CD8-positive, alpha-beta T cell (primary cell): ENCODE measurements at regions of chr11 and their contacts with region 1.

Region 1: DNA sequence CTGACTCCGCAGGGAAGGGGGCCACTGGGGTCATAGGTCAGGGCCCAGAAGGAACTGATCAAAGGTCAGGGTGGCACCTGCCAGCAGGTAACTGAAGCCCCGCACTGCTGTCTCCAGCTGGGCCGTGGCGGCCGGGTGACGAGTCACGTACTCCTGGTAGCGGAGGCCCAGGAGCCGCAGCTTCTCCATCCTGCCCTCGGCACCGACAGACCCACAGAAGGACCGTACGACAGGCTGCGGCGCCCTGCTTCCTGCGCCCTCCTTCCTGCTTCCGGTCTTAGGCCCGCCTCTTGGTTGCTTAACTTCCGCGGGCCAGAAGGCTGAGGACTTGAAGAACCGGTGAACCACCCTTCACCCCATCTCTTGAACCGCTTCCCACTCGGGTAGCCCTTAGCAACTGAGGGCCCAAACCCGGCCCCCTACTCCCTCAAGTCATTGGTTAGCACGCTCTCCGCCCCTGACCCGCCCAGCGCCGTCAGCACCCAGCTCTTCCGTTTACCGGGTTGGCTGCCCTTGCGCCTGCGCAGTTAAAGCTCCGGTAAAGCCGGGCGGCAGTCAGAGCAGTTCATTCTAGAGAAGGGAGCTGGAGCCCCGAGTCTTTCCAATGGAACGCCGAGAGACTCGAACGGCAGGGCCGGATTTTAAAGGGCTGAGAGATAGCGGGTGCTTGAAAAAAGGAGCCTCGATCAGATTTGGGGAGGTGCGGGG is at the start of gene PEX16:
- DNase-seq: peak; percentile 90 to 99 (median 94)
- ATAC-seq: peak; percentile 90
- H3K4me3 ChIP-seq: peak within 1 kb of the TSS; percentile 94 to 98
- H3K4me3 Mint-ChIP-seq: peak within 1 kb of the TSS; percentile 91
- H3K27ac ChIP-seq: peak within 1 kb of the TSS; percentile 91 to 94
- H3K27ac Mint-ChIP-seq: peak within 1 kb of the TSS; percentile 96
- H3K4me1 ChIP-seq: peaks cover 26% of the 10 kb centered on the region
- H3K4me1 Mint-ChIP-seq: peaks cover 49% of the 10 kb centered on the region
- H3K27me3 ChIP-seq: no peaks in the 10 kb centered on the region
- H3K27me3 Mint-ChIP-seq: peaks cover 2% of the 10 kb centered on the region
- CTCF ChIP-seq: no peak
- total RNA-seq, gene PEX16: 51.5 to 55.6 TPM

Region 2: DNA sequence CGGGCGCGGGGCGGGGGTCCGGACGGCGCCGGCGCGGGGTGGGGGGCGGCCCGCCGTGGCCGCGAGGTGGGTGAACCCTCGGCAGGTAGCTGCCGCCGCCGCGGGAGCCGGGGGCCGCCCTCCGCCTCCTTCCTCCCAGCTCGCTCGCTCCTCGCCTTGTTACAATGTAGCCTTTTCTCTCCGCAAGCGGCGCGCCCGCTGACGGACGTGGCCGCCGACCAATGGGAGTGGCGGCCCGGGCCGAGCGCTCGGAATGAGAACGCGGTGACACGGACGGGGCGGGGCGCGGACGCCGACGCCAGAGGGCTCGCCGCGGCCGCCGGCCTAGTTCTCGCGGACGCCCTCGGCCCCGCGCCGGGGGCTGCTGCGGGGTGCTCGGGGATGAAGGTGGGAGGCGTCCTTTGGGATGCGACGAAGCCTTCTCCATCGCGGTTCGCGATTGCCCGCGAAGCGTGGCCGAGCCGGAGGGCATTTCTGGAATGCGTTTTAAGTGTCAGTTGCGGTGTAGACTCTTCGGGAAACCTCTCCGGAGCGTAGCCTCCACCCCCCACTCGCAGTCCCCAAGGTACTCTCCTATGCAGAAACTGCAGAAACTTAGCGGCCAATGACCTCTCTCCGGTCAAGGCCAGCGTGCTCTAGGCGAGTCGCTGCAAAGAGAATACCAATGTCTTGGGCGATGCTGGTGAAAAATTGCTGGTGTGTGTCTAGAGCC is 770.6 kb before region 1 on chr11:
- CTCF ChIA-PET with region 1: no interaction called
- POLR2A ChIA-PET with region 1: no interaction called
- intact Hi-C with region 1: loop called in 1 of 2 experiments (anchors 5 kb)
- DNase-seq: peak; percentile 84 to 96 (median 91)
- ATAC-seq: peak; percentile 96
- H3K4me3 ChIP-seq: peak overlapping the region; percentile 78 to 89
- H3K4me3 Mint-ChIP-seq: peak overlapping the region; percentile 84
- H3K27ac ChIP-seq: peak overlapping the region; percentile 52 to 70
- H3K27ac Mint-ChIP-seq: peak overlapping the region; percentile 89
- H3K4me1 ChIP-seq: peaks cover 16% of the 10 kb centered on the region
- H3K4me1 Mint-ChIP-seq: peaks cover 38% of the 10 kb centered on the region
- H3K27me3 ChIP-seq: no peaks in the 10 kb centered on the region
- H3K27me3 Mint-ChIP-seq: peaks cover 10% of the 10 kb centered on the region
- CTCF ChIP-seq: no peak

Region 3: DNA sequence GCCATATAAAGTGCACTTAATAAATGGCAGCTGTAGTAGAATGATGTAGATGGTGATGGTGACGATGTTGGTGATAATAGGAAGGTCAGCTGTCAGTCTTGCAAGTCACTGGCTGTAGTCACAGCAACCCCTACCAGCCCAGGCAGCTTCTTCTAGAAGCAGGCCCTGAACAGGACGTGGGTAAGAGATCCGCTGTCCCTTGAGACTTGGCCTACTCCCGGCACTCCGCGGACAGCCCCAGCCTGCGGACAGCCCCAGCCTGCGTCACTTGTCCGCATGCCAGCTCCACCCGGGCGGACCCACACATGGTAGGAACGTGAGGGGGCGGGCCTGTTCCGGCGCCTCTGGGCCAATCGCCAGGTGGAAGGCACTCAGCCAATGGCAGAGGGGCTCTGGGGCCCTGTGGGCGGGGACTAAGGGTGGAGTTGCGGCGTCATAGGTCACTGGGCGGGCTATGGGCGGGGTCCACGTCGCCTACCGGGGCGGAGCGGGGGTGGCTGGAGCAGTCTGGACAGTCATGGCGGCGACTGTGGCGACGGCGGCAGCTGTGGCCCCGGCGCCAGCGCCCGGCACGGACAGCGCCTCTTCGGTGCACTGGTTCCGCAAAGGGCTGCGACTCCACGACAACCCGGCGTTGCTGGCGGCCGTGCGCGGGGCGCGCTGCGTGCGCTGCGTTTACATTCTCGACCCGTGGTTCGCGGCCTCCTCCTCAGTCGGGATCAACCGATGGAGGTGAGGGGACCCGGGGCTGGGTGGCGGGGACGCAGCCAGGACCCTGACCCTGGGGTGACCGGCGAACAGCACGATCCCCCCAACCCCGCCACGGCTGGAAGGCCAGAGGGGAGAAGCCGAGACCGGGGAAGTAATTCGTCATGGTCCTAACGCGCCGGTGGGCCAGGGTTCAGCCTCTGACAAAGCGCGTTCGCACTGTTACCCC is 70.5 kb before region 1 on chr11 and contains the start of gene CRY2:
- CTCF ChIA-PET with region 1: interaction called, 3 read pairs
- POLR2A ChIA-PET with region 1: interaction called, 10 read pairs
- intact Hi-C with region 1: loop called (anchors 1 kb)
- DNase-seq: peak; percentile 98 to 99 (median 98)
- ATAC-seq: peak; percentile 86
- H3K4me3 ChIP-seq: peak within 1 kb of the TSS; percentile 81 to 96
- H3K4me3 Mint-ChIP-seq: peak within 1 kb of the TSS; percentile 82
- H3K27ac ChIP-seq: peak within 1 kb of the TSS; percentile 88 to 96
- H3K27ac Mint-ChIP-seq: peak within 1 kb of the TSS; percentile 95
- H3K4me1 ChIP-seq: peaks cover 36% of the 10 kb centered on the region
- H3K4me1 Mint-ChIP-seq: peaks cover 56% of the 10 kb centered on the region
- H3K27me3 ChIP-seq: no peaks in the 10 kb centered on the region
- H3K27me3 Mint-ChIP-seq: no peaks in the 10 kb centered on the region
- CTCF ChIP-seq: no peak
- total RNA-seq, gene CRY2: 172 to 177 TPM

Region 4: DNA sequence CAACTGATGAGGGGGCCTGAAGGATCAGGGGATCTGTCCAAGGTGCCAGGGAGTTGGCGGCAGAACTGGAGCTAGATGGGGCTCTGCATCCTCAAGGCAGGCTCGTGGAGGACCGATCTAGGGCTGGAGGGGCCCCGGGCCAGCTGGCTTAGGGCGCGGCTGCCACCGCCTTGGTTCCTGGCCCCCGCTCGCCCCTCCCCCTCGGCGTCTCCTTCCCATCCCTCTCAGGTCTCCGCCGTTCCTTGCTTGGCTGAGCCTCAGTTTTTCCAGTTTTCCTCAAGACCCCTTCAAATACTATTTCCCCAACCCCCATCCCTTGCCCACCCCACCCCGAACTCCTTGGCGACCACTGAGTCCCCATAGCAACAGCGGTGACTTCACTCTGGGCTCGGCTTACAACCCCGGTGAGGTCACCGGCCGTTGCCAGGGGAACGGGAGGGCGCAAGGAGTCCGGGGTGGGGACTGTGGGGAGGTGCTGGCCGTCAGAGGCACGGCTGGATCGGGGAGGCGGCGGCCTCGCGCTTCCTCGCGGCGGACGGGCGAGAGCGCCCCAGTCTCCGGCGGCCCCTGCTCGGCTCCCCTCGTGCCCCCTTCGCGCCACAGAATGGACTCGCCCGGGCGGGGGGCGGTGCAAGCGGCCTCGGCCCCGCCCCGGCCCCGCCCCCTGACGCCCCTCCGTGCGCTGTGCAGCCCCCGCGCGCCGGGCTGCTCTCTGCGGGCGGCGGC is 18.2 kb before region 1 on chr11:
- CTCF ChIA-PET with region 1: no interaction called
- POLR2A ChIA-PET with region 1: interaction called, 3 read pairs
- intact Hi-C with region 1: loop called (anchors 1 to 2 kb)
- DNase-seq: peak; percentile 31 to 88 (median 63)
- ATAC-seq: peak; percentile 79
- H3K4me3 ChIP-seq: peak overlapping the region; percentile 27 to 53
- H3K4me3 Mint-ChIP-seq: peak overlapping the region; percentile 69
- H3K27ac ChIP-seq: peak overlapping the region in 1 of 2 experiments; percentile 30
- H3K27ac Mint-ChIP-seq: no peak overlapping the region
- H3K4me1 ChIP-seq: peaks cover 9% of the 10 kb centered on the region
- H3K4me1 Mint-ChIP-seq: peaks cover 8% of the 10 kb centered on the region
- H3K27me3 ChIP-seq: peaks cover 6 to 22% of the 10 kb centered on the region in 2 experiments
- H3K27me3 Mint-ChIP-seq: peaks cover 11% of the 10 kb centered on the region
- CTCF ChIP-seq: no peak

Region 5: GRCh38 chr11:46112961-46113617 is 195.3 kb after region 1 on chr11:
- CTCF ChIA-PET with region 1: no interaction called
- POLR2A ChIA-PET with region 1: no interaction called
- intact Hi-C with region 1: loop called in 1 of 2 experiments (anchors 1 kb)
- DNase-seq: peak in 5 of 9 experiments; percentile 18 to 85 (median 26)
- ATAC-seq: peak; percentile 100
- H3K4me3 ChIP-seq: peak overlapping the region in 1 of 2 experiments; percentile 2
- H3K4me3 Mint-ChIP-seq: no peak overlapping the region
- H3K27ac ChIP-seq: no peak overlapping the region
- H3K27ac Mint-ChIP-seq: no peak overlapping the region
- H3K4me1 ChIP-seq: peaks cover 41% of the 10 kb centered on the region
- H3K4me1 Mint-ChIP-seq: peaks cover 40% of the 10 kb centered on the region
- H3K27me3 ChIP-seq: no peaks in the 10 kb centered on the region
- H3K27me3 Mint-ChIP-seq: no peaks in the 10 kb centered on the region
- CTCF ChIP-seq: no peak

Region 6: GRCh38 chr11:46295312-46296058 is 377.7 kb after region 1 on chr11:
- CTCF ChIA-PET with region 1: no interaction called
- POLR2A ChIA-PET with region 1: no interaction called
- intact Hi-C with region 1: loop called in 1 of 2 experiments (anchors 5 kb)
- DNase-seq: peak; percentile 32 to 83 (median 76)
- ATAC-seq: peak; percentile 100
- H3K4me3 ChIP-seq: peak overlapping the region; percentile 54 to 57
- H3K4me3 Mint-ChIP-seq: peak overlapping the region; percentile 85
- H3K27ac ChIP-seq: no peak overlapping the region
- H3K27ac Mint-ChIP-seq: no peak overlapping the region
- H3K4me1 ChIP-seq: peaks cover 13% of the 10 kb centered on the region
- H3K4me1 Mint-ChIP-seq: peaks cover 7% of the 10 kb centered on the region
- H3K27me3 ChIP-seq: peaks cover 5 to 8% of the 10 kb centered on the region in 2 experiments
- H3K27me3 Mint-ChIP-seq: peaks cover 21% of the 10 kb centered on the region
- CTCF ChIP-seq: no peak

Region 7: GRCh38 chr11:46593550-46594373 is 676.0 kb after region 1 on chr11 and contains the start of gene AMBRA1:
- CTCF ChIA-PET with region 1: no interaction called
- POLR2A ChIA-PET with region 1: no interaction called
- intact Hi-C with region 1: loop called in 1 of 2 experiments (anchors 10 kb)
- DNase-seq: peak; percentile 70 to 91 (median 81)
- ATAC-seq: peak; percentile 90
- H3K4me3 ChIP-seq: peak within 1 kb of the TSS; percentile 67 to 80
- H3K4me3 Mint-ChIP-seq: peak within 1 kb of the TSS; percentile 98
- H3K27ac ChIP-seq: peak within 1 kb of the TSS; percentile 57 to 67
- H3K27ac Mint-ChIP-seq: peak within 1 kb of the TSS; percentile 96
- H3K4me1 ChIP-seq: peaks cover 32% of the 10 kb centered on the region
- H3K4me1 Mint-ChIP-seq: peaks cover 43% of the 10 kb centered on the region
- H3K27me3 ChIP-seq: no peaks in the 10 kb centered on the region
- H3K27me3 Mint-ChIP-seq: no peaks in the 10 kb centered on the region
- CTCF ChIP-seq: no peak
- total RNA-seq, gene AMBRA1: 31.2 to 34.1 TPM